Panc1 (cell line): ENCODE measurements at regions of chr12 and their contacts with region 1.

Region 1: GRCh38 chr12:40921563-40922163 is 229.4 kb downstream of the CNTN1 start:
- DNase-seq: no peak
- ATAC-seq: no peak
- H3K4me3 ChIP-seq: no peak overlapping the region
- H3K27ac ChIP-seq: no peak overlapping the region
- H3K4me1 ChIP-seq: no peaks in the 10 kb centered on the region
- H3K27me3 ChIP-seq: no peaks in the 10 kb centered on the region
- CTCF ChIP-seq: peak; percentile 65; the same call in 1 of the 2 replicates

Region 2: GRCh38 chr12:40152783-40153383 is 768.8 kb before region 1 on chr12:
- CTCF ChIA-PET with region 1: no interaction called
- POLR2A ChIA-PET with region 1: no interaction called
- in situ Hi-C with region 1: no loop called
- intact Hi-C with region 1: loop called (anchors 5 kb)
- DNase-seq: peak; percentile 13
- ATAC-seq: no peak
- H3K4me3 ChIP-seq: no peak overlapping the region
- H3K27ac ChIP-seq: no peak overlapping the region
- H3K4me1 ChIP-seq: no peaks in the 10 kb centered on the region
- H3K27me3 ChIP-seq: no peaks in the 10 kb centered on the region; the same call in none of the 2 replicates
- CTCF ChIP-seq: peak; percentile 83; the same call in 1 of the 2 replicates

Region 3: DNA sequence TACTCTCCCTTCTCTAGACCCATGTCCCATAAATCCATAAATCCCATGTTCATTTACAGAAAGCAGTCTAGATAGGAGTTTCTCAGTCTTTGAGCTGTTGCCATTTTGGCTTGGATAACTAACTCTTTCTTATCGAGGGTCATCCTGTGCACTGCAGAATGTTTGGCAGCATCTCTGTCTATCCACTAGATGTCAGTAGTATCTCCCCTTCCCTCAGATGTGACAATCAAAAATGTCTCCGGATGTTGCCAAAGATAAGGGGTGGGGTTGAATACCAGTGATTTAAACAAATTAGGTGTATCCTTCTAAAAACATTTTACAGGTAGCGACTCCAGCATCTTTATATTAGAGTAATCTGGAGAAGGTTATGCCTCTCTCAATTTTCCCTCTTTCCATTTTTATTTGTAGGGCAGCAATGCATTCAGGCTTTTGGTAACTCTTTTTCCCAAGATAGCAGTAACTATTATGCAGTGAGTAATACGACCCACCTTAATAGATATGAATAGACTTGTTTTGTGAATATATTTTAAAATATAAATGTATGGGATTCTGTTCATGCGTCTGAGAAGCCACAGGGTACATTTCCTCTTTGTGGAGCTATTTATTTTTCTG is 596.2 kb before region 1 on chr12:
- CTCF ChIA-PET with region 1: interaction called, 8 read pairs
- POLR2A ChIA-PET with region 1: no interaction called
- in situ Hi-C with region 1: no loop called
- intact Hi-C with region 1: loop called (anchors 10 kb)
- DNase-seq: peak; percentile 64
- ATAC-seq: peak; percentile 92
- H3K4me3 ChIP-seq: peak overlapping the region; percentile 9 to 32; a peak in 3 of 4 replicates
- H3K27ac ChIP-seq: no peak overlapping the region
- H3K4me1 ChIP-seq: no peaks in the 10 kb centered on the region
- H3K27me3 ChIP-seq: no peaks in the 10 kb centered on the region
- CTCF ChIP-seq: peak; percentile 84

Region 4: GRCh38 chr12:40622246-40622838 is 299.3 kb before region 1 on chr12:
- CTCF ChIA-PET with region 1: no interaction called
- POLR2A ChIA-PET with region 1: no interaction called
- in situ Hi-C with region 1: no loop called
- intact Hi-C with region 1: loop called (anchors 1 kb)
- DNase-seq: peak; percentile 22
- ATAC-seq: no peak
- H3K4me3 ChIP-seq: no peak overlapping the region
- H3K27ac ChIP-seq: no peak overlapping the region
- H3K4me1 ChIP-seq: no peaks in the 10 kb centered on the region
- H3K27me3 ChIP-seq: no peaks in the 10 kb centered on the region
- CTCF ChIP-seq: peak; percentile 76

Region 5: GRCh38 chr12:40980427-40980961 is 58.8 kb after region 1 on chr12:
- CTCF ChIA-PET with region 1: no interaction called
- POLR2A ChIA-PET with region 1: no interaction called
- in situ Hi-C with region 1: no loop called
- intact Hi-C with region 1: no loop called
- DNase-seq: no peak
- ATAC-seq: no peak
- H3K4me3 ChIP-seq: no peak overlapping the region
- H3K27ac ChIP-seq: no peak overlapping the region
- H3K4me1 ChIP-seq: no peaks in the 10 kb centered on the region
- H3K27me3 ChIP-seq: no peaks in the 10 kb centered on the region
- CTCF ChIP-seq: no peak